ENCODE measurements at regions of chr12 and their contacts with region 1.

Region 1: DNA sequence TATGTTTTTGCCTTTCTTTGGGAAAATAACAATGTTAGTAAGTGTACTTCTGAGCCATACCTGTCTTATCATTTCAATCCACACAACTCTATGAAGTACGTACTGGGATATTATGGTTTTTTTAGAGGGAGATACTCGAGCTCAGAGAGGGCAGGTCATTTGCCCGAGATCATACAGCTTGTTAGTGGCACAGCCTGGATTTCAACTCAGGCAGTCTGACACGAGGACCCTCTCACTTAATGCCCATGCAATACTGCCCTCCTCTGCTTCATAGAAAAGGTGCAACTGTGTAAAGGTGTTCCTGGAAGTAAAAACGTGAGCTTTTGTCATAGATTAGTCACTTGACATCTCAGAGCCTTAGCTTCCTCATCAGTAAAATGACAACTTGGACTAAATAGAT is 128.0 kb downstream of the NDUFA12 start:
- DNase-seq: peak; percentile 47
- H3K4me3 ChIP-seq: no peak overlapping the region
- H3K27ac ChIP-seq: no peak overlapping the region
- H3K4me1 ChIP-seq: peaks cover 14% of the 10 kb centered on the region
- H3K27me3 ChIP-seq: peaks cover 24% of the 10 kb centered on the region
- CTCF ChIP-seq: peak in 1 of 2 donors; percentile 37

Region 2: DNA sequence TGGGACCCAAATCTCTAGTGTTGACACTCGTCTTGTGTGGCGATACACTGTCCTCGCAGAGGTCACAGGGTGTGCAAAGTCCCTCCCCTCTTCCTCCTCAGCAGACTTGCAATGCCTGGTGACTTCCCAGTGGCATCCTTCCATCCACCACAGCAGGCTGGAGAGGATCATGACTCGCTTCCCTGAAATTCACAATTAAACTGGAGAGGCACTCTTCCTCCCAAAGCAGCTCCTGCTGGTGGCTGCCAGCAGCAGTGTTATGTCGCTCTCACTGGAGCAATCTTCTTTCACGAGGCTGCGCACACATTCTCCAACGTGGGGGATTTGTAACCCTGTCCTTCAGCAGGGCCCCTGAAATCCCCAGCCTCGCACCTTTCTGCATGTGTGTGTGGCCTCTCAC is 80.0 kb before region 1 on chr12:
- CTCF ChIA-PET with region 1: no interaction called
- dilution Hi-C with region 1: loop called (anchors 5 kb)
- in situ Hi-C with region 1: no loop called
- intact Hi-C with region 1: no loop called
- DNase-seq: peak; percentile 64
- H3K4me3 ChIP-seq: no peak overlapping the region
- H3K27ac ChIP-seq: no peak overlapping the region
- H3K4me1 ChIP-seq: peaks cover 31% of the 10 kb centered on the region
- H3K27me3 ChIP-seq: no peaks in the 10 kb centered on the region
- CTCF ChIP-seq: peak in 1 of 2 donors; percentile 40

Region 3: GRCh38 chr12:94930216-94930654 is 54.7 kb after region 1 on chr12:
- CTCF ChIA-PET with region 1: no interaction called
- dilution Hi-C with region 1: loop called (anchors 5 kb)
- in situ Hi-C with region 1: no loop called
- intact Hi-C with region 1: no loop called
- DNase-seq: no peak
- H3K4me3 ChIP-seq: no peak overlapping the region
- H3K27ac ChIP-seq: no peak overlapping the region
- H3K4me1 ChIP-seq: no peaks in the 10 kb centered on the region
- H3K27me3 ChIP-seq: no peaks in the 10 kb centered on the region
- CTCF ChIP-seq: no peak

Region 4: GRCh38 chr12:95037906-95038305 is 162.4 kb after region 1 on chr12:
- CTCF ChIA-PET with region 1: no interaction called
- dilution Hi-C with region 1: no loop called
- in situ Hi-C with region 1: no loop called
- intact Hi-C with region 1: no loop called
- DNase-seq: no peak
- H3K4me3 ChIP-seq: no peak overlapping the region
- H3K27ac ChIP-seq: no peak overlapping the region
- H3K4me1 ChIP-seq: no peaks in the 10 kb centered on the region
- H3K27me3 ChIP-seq: no peaks in the 10 kb centered on the region
- CTCF ChIP-seq: no peak

Measured in mammary epithelial cell (primary cell).